ENCODE measurements at regions of chr15 and their contacts with region 1.

Region 1: DNA sequence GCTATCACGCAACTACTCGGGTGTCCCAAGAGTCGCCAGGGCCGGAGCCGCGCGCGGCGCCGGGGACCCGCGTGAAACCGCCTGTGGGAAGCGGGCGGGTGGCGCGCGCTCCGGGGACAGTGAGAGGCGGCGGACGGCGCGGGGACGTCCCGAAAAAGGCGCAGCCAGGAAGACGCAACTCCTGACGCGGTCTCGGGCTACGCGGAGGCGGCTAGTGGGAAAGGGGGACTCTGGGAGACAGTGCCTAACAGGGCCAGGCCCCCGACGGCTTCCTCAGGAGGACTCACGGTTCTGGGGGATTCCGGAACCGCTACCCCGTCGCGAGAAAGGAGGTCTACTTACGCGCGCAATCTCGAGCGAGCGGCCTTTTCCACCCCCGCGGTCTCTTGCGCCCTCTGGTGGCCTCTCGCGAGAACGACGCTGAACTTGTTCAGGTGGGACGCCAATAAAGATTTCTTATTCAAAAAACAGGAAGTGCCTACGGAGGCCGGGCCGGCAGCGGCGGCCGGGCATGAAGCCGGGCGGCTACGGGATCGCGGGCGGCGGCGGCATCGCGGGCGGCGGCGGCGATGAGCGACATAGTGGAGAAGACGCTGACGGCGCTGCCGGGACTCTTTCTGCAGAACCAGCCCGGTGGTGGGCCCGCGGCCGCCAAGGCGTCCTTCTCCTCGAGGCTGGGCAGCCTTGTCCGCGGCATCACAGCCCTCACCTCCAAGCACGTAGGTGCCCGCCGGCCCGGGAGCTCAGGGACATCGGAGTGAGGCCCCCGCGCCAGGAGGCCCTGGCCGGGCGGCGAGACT is at the start of gene AP4E1:
- DNase-seq: peak; percentile 93
- ATAC-seq: peak; percentile 58
- H3K4me3 Mint-ChIP-seq: peak within 1 kb of the TSS; percentile 91
- H3K27ac Mint-ChIP-seq: peak within 1 kb of the TSS; percentile 97
- H3K4me1 Mint-ChIP-seq: peaks cover 40% of the 10 kb centered on the region
- H3K27me3 Mint-ChIP-seq: no peaks in the 10 kb centered on the region
- CTCF ChIP-seq: no peak
- total RNA-seq, gene AP4E1: 11.1 and 13.4 TPM in 2 replicates

Region 2: DNA sequence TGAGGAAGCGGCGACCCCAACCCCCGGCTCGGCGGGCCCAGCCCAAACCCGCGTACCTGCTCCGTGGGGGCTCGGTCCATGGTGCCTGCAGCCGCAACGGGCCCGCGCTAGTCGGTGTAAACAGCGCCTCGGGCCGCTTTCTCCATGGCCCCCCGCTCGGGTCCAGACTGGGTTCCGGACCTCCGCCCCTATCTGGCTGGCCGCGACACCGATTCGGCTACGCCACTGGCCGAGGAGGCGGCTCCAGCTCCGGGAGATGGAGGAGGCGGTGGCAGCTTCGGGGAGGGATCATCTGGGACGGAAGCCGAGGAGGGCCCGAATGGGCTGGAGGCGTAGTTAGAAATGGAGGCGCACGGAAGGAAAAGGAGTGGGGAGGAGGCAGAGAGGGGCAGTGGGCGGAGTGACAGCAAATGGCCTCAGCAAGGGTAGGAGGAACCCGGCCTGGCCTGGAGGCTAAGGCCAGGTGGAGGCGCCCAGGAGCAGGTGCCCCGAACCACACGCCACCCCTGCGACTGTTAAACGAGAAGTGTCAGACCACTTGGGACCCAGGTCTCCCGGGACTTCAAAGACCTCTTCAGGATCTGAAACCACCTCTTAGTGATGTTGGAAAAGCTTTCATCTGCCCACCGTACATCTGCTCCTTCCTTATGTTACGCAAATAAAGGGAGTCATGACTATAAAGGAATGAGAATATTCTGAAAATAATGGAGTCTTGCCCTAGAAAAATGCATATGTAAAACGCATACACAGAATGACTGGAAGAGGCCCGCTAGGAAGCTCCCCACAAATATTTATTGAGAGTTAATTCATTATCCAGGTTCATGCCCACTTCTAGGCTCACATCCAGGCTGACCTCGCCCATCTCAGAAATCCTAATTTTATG is 1861.9 kb before region 1 on chr15 and contains the start of gene SECISBP2L:
- CTCF ChIA-PET with region 1: no interaction called
- POLR2A ChIA-PET with region 1: no interaction called
- intact Hi-C with region 1: loop called (anchors 10 kb)
- DNase-seq: peak; percentile 82
- ATAC-seq: peak; percentile 97
- H3K4me3 Mint-ChIP-seq: peak within 1 kb of the TSS; percentile 97
- H3K27ac Mint-ChIP-seq: peak within 1 kb of the TSS; percentile 95
- H3K4me1 Mint-ChIP-seq: peaks cover 36% of the 10 kb centered on the region
- H3K27me3 Mint-ChIP-seq: no peaks in the 10 kb centered on the region
- CTCF ChIP-seq: no peak
- total RNA-seq, gene SECISBP2L: 52.6 and 56.5 TPM in 2 replicates

Region 3: GRCh38 chr15:50182219-50183013 is 726.0 kb before region 1 on chr15:
- CTCF ChIA-PET with region 1: no interaction called
- POLR2A ChIA-PET with region 1: no interaction called
- intact Hi-C with region 1: loop called (anchors 5 kb)
- DNase-seq: peak; percentile 37
- ATAC-seq: peak; percentile 31
- H3K4me3 Mint-ChIP-seq: peak overlapping the region; percentile 90
- H3K27ac Mint-ChIP-seq: no peak overlapping the region
- H3K4me1 Mint-ChIP-seq: peaks cover 16% of the 10 kb centered on the region
- H3K27me3 Mint-ChIP-seq: peaks cover 20% of the 10 kb centered on the region
- CTCF ChIP-seq: no peak

Region 4: GRCh38 chr15:50484781-50485180 is 423.6 kb before region 1 on chr15:
- CTCF ChIA-PET with region 1: no interaction called
- POLR2A ChIA-PET with region 1: no interaction called
- intact Hi-C with region 1: loop called (anchors 5 kb)
- DNase-seq: no peak
- ATAC-seq: peak; percentile 78
- H3K4me3 Mint-ChIP-seq: no peak overlapping the region
- H3K27ac Mint-ChIP-seq: peak overlapping the region; percentile 54
- H3K4me1 Mint-ChIP-seq: peaks cover 39% of the 10 kb centered on the region
- H3K27me3 Mint-ChIP-seq: no peaks in the 10 kb centered on the region
- CTCF ChIP-seq: no peak

Region 5: GRCh38 chr15:50686468-50687301 is 221.7 kb before region 1 on chr15 and contains the start of gene TRPM7:
- CTCF ChIA-PET with region 1: no interaction called
- POLR2A ChIA-PET with region 1: interaction called, 10 read pairs
- intact Hi-C with region 1: loop called (anchors 1 kb)
- DNase-seq: peak; percentile 92
- ATAC-seq: peak; percentile 80
- H3K4me3 Mint-ChIP-seq: peak within 1 kb of the TSS; percentile 99
- H3K27ac Mint-ChIP-seq: peak within 1 kb of the TSS; percentile 92
- H3K4me1 Mint-ChIP-seq: peaks cover 58% of the 10 kb centered on the region
- H3K27me3 Mint-ChIP-seq: no peaks in the 10 kb centered on the region
- CTCF ChIP-seq: no peak
- total RNA-seq, gene TRPM7: 59.4 and 64.7 TPM in 2 replicates

Region 6: GRCh38 chr15:50876989-50877360 is 31.4 kb before region 1 on chr15:
- CTCF ChIA-PET with region 1: interaction called, 5 read pairs
- POLR2A ChIA-PET with region 1: interaction called, 8 read pairs
- intact Hi-C with region 1: loop called (anchors 5 kb)
- DNase-seq: peak; percentile 27
- ATAC-seq: peak; percentile 45
- H3K4me3 Mint-ChIP-seq: peak overlapping the region; percentile 82
- H3K27ac Mint-ChIP-seq: peak overlapping the region; percentile 27
- H3K4me1 Mint-ChIP-seq: peaks cover 39% of the 10 kb centered on the region
- H3K27me3 Mint-ChIP-seq: peaks cover 4% of the 10 kb centered on the region
- CTCF ChIP-seq: peak; percentile 98

Region 7: DNA sequence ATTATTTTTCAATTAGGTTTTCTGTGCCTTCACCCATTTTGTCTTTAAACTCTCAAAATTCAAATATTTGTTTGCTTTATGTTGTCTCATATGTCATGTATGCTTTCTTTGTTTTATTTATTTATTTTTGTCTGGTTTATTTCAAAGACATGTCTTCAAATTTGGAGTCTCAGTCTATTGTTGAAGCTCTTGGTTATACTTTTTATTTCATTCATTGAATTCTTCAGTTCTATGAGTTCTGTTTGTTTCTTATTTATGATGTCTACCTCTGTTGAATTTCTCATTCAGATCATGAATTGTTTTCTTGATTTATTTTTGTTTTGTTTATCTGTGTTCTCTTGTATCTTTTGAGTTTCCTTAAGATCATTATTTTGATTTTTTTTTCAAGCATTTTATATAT is 55.7 kb after region 1 on chr15:
- CTCF ChIA-PET with region 1: no interaction called
- POLR2A ChIA-PET with region 1: no interaction called
- intact Hi-C with region 1: no loop called
- DNase-seq: no peak
- ATAC-seq: no peak
- H3K4me3 Mint-ChIP-seq: no peak overlapping the region
- H3K27ac Mint-ChIP-seq: no peak overlapping the region
- H3K4me1 Mint-ChIP-seq: no peaks in the 10 kb centered on the region
- H3K27me3 Mint-ChIP-seq: no peaks in the 10 kb centered on the region
- CTCF ChIP-seq: no peak

Region 8: DNA sequence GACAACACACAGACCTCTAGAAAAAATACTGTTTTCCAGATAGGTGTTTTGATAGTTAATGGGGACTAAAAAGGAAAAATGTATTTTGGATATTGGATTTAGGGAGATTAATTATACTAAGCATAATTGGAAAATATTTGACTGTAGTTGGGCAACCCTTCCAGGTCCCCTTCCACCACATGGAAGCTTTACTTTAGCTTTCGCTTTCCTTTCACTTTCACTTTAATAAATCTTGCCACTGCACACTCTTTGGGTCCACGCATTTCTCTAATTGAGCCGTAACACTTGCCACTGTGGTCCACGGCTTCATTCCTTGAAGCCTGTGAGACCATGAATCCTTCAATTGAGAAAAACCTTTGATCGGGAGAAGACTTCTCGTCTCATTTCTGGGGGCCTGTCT is 448.6 kb after region 1 on chr15:
- CTCF ChIA-PET with region 1: no interaction called
- POLR2A ChIA-PET with region 1: no interaction called
- intact Hi-C with region 1: no loop called
- DNase-seq: no peak
- ATAC-seq: no peak
- H3K4me3 Mint-ChIP-seq: no peak overlapping the region
- H3K27ac Mint-ChIP-seq: no peak overlapping the region
- H3K4me1 Mint-ChIP-seq: peaks cover 2% of the 10 kb centered on the region
- H3K27me3 Mint-ChIP-seq: peaks cover 12% of the 10 kb centered on the region
- CTCF ChIP-seq: no peak